Activated CD4-positive, alpha-beta T cell treated with anti-CD3 and anti-CD28 coated beads for 36 hours (primary cell): ENCODE measurements at regions of chr6 and their contacts with region 1.

Region 1: GRCh38 chr6:30378290-30378937 is 33.5 kb downstream of the RPP21 start:
- DNase-seq: no peak
- ATAC-seq: no peak
- H3K4me3 Mint-ChIP-seq: no peak overlapping the region
- H3K27ac Mint-ChIP-seq: no peak overlapping the region
- H3K4me1 Mint-ChIP-seq: no peaks in the 10 kb centered on the region
- H3K27me3 Mint-ChIP-seq: peaks cover 33% of the 10 kb centered on the region

Region 2: GRCh38 chr6:30357678-30358540 is 20.5 kb before region 1 on chr6:
- CTCF ChIA-PET with region 1: interaction called, 11 read pairs
- POLR2A ChIA-PET with region 1: no interaction called
- intact Hi-C with region 1: no loop called
- DNase-seq: peak; percentile 68
- ATAC-seq: peak; percentile 81
- H3K4me3 Mint-ChIP-seq: peak overlapping the region; percentile 73
- H3K27ac Mint-ChIP-seq: no peak overlapping the region
- H3K4me1 Mint-ChIP-seq: peaks cover 6% of the 10 kb centered on the region
- H3K27me3 Mint-ChIP-seq: peaks cover 51% of the 10 kb centered on the region